Panc1 (cell line): ENCODE measurements at regions of chr1 and their contacts with region 1.

Region 1: GRCh38 chr1:224454397-224455066 is 19.9 kb upstream of the WDR26 start:
- DNase-seq: no peak
- ATAC-seq: no peak
- H3K4me3 ChIP-seq: no peak overlapping the region
- H3K27ac ChIP-seq: no peak overlapping the region
- H3K4me1 ChIP-seq: peaks cover 13% of the 10 kb centered on the region
- H3K27me3 ChIP-seq: no peaks in the 10 kb centered on the region
- CTCF ChIP-seq: no peak

Region 2: DNA sequence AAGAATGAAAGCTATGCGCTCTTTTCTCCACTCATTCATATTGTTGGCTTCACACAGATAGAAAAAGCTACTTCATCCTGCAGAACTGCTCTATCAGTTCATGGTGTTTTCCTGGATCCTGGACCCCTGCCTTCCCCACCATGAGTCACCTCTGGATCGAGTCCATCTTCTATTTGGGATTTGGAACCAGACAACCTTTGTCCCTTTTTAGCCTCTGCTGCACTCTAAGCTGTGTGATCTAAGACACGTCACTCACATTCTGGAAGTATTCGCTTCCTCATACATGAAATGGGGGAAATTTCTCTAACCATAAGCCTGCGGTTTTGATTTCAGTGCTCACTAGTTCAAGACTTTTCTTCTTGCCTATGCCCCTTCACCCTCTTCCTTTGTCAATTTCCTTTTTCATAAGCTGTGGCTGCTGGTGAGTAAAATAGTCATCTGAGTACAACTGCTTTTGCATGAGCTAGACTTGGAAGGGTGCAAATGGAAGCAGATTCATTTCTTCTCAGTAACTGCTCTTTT is 285.6 kb before region 1 on chr1:
- CTCF ChIA-PET with region 1: no interaction called
- POLR2A ChIA-PET with region 1: interaction called, 13 read pairs
- in situ Hi-C with region 1: no loop called
- intact Hi-C with region 1: no loop called
- DNase-seq: no peak
- ATAC-seq: no peak
- H3K4me3 ChIP-seq: no peak overlapping the region
- H3K27ac ChIP-seq: no peak overlapping the region
- H3K4me1 ChIP-seq: peaks cover 3% of the 10 kb centered on the region; the same call in 1 of the 2 replicates
- H3K27me3 ChIP-seq: no peaks in the 10 kb centered on the region
- CTCF ChIP-seq: no peak

Region 3: GRCh38 chr1:224438989-224439388 is 15.5 kb before region 1 on chr1:
- CTCF ChIA-PET with region 1: no interaction called
- POLR2A ChIA-PET with region 1: interaction called, 11 read pairs
- in situ Hi-C with region 1: no loop called
- intact Hi-C with region 1: no loop called
- DNase-seq: no peak
- ATAC-seq: no peak
- H3K4me3 ChIP-seq: no peak overlapping the region
- H3K27ac ChIP-seq: peak overlapping the region; percentile 45
- H3K4me1 ChIP-seq: peaks cover 19% of the 10 kb centered on the region
- H3K27me3 ChIP-seq: no peaks in the 10 kb centered on the region
- CTCF ChIP-seq: no peak